Mammary epithelial cell (primary cell): ENCODE measurements at regions of chr9 and their contacts with region 1.

Region 1: DNA sequence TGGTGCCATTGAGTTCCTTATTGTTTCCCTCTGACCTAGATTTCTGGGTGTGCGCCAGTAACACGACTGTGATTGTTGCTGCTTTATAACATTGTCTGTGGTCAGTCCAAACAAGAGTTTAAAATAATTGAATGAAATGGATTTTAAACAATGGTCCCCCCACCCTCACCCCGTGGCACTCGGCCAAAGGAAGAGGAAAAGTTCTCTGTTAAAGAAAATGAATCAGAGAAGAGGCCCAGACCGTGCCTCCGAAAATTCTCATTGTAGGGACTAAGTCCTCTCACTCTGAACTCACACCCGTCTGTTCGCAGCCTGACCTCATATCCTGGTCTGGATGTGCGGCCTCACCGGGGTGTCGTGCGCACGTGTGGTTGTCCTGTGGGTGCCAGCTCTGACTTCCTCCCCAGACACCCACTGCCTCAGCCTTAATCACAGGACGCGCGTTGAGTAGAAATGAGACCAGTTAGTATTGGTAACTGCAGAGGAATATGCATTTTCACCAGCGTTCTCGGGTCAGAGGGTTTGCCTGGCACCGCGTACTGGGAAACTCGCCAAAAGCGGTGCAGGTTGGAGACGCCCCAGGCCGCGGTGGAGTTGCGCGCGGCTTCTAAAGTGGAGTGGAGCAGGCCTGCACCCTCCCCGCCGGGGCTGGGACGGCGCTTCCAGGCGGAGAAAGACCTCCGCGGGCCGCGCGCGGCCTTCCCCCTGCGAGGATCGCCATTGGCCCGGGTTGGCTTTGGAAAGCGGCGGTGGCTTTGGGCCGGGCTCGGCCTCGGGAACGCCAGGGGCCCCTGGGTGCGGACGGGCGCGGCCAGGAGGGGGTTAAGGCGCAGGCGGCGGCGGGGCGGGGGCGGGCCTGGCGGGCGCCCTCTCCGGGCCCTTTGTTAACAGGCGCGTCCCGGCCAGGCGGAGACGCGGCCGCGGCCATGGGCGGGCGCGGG is at the start of gene ABL1:
- DNase-seq: peak; percentile 93
- H3K4me3 ChIP-seq: peak within 1 kb of the TSS; percentile 67 to 78 (median 78)
- H3K27ac ChIP-seq: peak within 1 kb of the TSS; percentile 80
- H3K4me1 ChIP-seq: peaks cover 19% of the 10 kb centered on the region
- H3K27me3 ChIP-seq: no peaks in the 10 kb centered on the region
- CTCF ChIP-seq: no peak
- total RNA-seq, gene ABL1: 50.5 to 52.8 TPM

Region 2: DNA sequence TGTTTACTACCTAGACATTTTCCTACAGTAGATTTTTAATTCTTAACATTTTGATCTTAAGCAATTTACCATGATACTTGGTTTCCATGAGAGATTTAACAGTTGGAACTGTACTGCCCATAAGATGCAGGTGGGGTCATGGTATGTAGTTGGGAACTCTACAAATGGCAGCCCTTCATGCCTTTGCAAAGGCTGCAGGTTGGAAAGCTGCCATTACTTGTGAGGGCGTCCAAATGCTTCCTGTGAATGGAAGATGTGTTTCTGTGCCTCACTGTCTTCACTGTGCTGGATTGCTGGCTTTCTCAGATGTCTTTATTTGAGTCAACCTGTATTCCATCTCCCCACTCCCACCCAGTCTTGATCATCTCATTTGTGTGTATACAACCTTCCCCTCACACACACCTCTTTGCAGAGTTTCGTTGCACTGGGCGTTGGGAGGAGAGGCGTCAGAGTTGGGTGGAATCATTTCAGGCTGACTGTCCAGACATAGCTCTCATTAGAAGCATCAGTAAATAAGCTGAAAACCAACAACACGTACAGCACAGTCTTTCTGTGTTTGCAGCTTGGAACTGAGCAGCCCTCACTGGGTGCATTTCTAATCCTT is 14.4 kb before region 1 on chr9:
- CTCF ChIA-PET with region 1: no interaction called
- dilution Hi-C with region 1: no loop called
- in situ Hi-C with region 1: no loop called
- intact Hi-C with region 1: no loop called
- DNase-seq: no peak
- H3K4me3 ChIP-seq: no peak overlapping the region
- H3K27ac ChIP-seq: no peak overlapping the region
- H3K4me1 ChIP-seq: peaks cover 4% of the 10 kb centered on the region
- H3K27me3 ChIP-seq: no peaks in the 10 kb centered on the region
- CTCF ChIP-seq: no peak

Region 3: GRCh38 chr9:130847327-130848217 is 12.9 kb after region 1 on chr9:
- CTCF ChIA-PET with region 1: no interaction called
- dilution Hi-C with region 1: no loop called
- in situ Hi-C with region 1: no loop called
- intact Hi-C with region 1: loop called (anchors 1 kb)
- DNase-seq: peak; percentile 98
- H3K4me3 ChIP-seq: peak overlapping the region in 1 of 3 experiments; percentile 5
- H3K27ac ChIP-seq: peak overlapping the region; percentile 76
- H3K4me1 ChIP-seq: peaks cover 35% of the 10 kb centered on the region
- H3K27me3 ChIP-seq: no peaks in the 10 kb centered on the region
- CTCF ChIP-seq: peak; percentile 22 to 41